ENCODE measurements at regions of chr14 and their contacts with region 1.

Region 1: DNA sequence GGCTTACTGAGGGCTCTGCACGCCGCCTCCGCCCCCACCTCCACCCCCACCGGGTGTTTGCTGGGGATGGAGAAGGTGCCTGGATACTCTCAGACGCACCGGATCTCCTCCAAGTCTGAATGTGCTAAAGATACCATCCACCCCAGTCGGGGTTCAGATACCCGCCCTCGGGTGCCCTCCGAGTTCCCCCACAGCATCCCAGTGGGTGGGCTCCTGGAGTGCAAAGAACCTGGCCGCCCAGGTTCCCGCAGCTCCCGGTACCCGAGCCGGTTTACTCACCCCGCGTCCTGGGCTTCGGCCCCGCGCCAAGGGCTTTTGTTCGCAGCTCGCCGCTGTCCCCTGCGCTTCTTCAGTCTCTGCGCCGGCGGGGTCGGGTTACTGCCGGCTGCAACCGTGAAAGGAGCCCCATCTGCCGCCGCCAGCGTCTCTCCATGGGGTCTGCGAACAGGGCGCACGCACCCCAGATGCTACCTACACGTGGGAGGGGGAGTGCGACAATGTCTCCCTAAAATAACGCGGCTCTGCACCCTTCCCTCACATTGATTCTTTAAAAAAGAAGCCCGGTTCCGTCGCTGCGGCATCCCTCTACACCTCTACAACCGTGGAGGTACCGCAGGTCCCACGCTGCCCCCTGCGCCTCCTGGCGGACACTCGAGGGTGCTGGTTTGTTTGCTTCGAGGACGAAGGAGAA is at the start of gene CCDC177:
- DNase-seq: peak; percentile 82
- ATAC-seq: peak; percentile 85
- H3K4me3 ChIP-seq: peak within 1 kb of the TSS in 4 of 5 experiments; percentile 31 to 72 (median 48)
- H3K4me3 Mint-ChIP-seq: peak within 1 kb of the TSS; percentile 84
- H3K27ac ChIP-seq: no peak within 1 kb of the TSS
- H3K27ac Mint-ChIP-seq: no peak within 1 kb of the TSS
- H3K4me1 ChIP-seq: peaks cover 21 to 26% of the 10 kb centered on the region in 2 donors
- H3K4me1 Mint-ChIP-seq: peaks cover 12% of the 10 kb centered on the region
- H3K27me3 ChIP-seq: peaks cover 0 to 58% (median 27%) of the 10 kb centered on the region in 4 experiments
- H3K27me3 Mint-ChIP-seq: peaks cover 52% of the 10 kb centered on the region
- CTCF ChIP-seq: peak; percentile 99
- total RNA-seq, gene CCDC177: not detected in 2 replicates

Region 2: DNA sequence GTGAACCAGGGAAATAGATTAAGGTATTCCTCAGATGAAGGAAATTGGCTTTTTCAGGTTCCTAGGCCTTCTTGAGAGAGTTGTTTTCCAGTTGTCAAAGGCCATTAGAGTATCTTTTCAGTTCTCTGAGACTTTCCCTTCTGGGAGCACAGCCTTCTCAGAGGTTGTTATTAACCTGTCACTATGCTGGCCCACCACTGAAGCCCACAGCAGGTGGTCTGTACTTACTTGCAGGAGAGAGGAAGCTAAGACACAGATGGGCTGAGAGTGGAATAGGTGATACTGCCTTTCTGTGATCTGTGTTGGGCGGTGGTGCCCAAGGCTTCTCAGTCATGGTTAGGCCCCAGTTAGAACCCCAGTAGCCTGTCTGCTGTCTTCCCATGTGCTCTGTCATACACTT is 337.3 kb before region 1 on chr14:
- CTCF ChIA-PET with region 1: interaction called, 102 read pairs
- POLR2A ChIA-PET with region 1: no interaction called
- intact Hi-C with region 1: loop called (anchors 1 kb)
- DNase-seq: no peak
- ATAC-seq: no peak
- H3K4me3 ChIP-seq: no peak overlapping the region
- H3K4me3 Mint-ChIP-seq: no peak overlapping the region
- H3K27ac ChIP-seq: no peak overlapping the region
- H3K27ac Mint-ChIP-seq: no peak overlapping the region
- H3K4me1 ChIP-seq: no peaks in the 10 kb centered on the region
- H3K4me1 Mint-ChIP-seq: no peaks in the 10 kb centered on the region
- H3K27me3 ChIP-seq: no peaks in the 10 kb centered on the region
- H3K27me3 Mint-ChIP-seq: no peaks in the 10 kb centered on the region
- CTCF ChIP-seq: no peak

Region 3: DNA sequence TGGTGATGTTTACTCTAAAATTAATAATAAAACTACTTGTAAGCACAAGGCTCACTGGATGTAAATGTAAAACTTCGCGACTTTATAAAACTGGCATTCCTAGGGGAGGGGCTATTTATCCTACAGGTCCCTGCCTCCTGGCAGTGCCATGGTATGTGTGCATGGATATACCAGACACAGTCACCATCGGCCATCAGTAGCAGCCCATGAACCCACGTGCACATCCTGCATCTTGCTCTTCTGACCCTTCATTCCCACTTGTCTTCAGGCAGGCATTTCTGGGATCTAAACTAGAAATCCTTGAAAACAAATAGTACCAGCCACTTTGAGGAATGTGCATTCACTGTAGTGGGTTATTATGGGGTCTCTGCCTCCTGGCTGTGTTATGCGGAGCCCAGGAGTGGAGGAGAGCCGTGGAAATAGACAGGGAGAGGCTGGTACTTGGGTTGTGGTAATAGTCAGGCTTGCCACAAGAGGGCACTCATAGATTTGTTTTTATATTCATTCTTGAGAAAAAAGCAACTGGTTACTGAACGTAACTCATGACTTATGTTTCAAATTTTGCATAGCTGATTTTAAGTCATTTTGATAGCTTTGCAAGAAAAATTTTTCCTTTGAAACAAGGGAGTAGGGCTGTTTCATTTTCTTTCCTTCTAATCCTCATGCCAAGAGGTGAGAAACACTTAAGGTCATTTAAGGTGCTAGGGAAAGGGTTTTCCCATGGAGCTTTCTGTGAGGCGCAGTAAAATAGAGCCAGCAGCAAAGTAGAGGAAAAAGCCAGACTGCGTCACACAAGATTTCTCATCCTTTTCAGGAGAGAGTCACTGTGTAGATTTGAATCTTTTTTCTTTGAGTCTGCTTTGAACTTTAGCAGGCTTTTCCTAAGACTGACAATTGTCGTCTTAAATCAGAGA is 331.8 kb before region 1 on chr14:
- CTCF ChIA-PET with region 1: interaction called, 102 read pairs
- POLR2A ChIA-PET with region 1: no interaction called
- intact Hi-C with region 1: loop called (anchors 1 kb)
- DNase-seq: peak; percentile 73
- ATAC-seq: peak; percentile 65
- H3K4me3 ChIP-seq: no peak overlapping the region
- H3K4me3 Mint-ChIP-seq: no peak overlapping the region
- H3K27ac ChIP-seq: no peak overlapping the region
- H3K27ac Mint-ChIP-seq: no peak overlapping the region
- H3K4me1 ChIP-seq: no peaks in the 10 kb centered on the region
- H3K4me1 Mint-ChIP-seq: peaks cover 3% of the 10 kb centered on the region
- H3K27me3 ChIP-seq: no peaks in the 10 kb centered on the region
- H3K27me3 Mint-ChIP-seq: no peaks in the 10 kb centered on the region
- CTCF ChIP-seq: peak; percentile 87

Region 4: DNA sequence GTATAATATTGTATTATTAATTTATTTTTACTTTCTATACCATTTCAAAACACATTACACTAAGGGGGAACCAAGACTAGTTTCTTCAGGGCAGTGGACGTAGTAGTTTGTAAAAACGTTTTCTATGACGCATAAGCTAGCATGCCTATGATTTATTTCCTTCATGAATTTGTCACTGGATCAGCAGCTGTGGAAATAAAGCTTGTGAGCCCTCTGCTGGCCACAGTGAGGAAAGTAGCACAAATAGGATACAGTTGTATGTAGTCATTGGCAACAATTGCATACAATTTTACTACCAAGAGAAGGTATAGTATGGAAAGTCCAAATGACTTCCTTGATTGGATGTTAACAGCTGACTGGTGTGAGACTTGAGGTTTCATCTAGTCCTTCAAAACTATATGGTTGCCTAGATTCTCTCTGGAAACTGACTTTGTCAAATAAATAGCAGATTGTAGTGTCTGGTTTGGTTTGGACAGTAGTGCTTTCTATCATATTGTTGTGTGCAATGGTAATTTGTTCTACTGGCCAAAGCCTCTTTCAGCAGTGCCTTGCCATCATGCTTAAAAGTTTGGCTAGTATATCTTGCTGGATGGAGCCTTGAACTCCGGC is 114.2 kb before region 1 on chr14:
- CTCF ChIA-PET with region 1: interaction called, 6 read pairs
- POLR2A ChIA-PET with region 1: no interaction called
- intact Hi-C with region 1: loop called (anchors 5 kb)
- DNase-seq: peak; percentile 72
- ATAC-seq: peak; percentile 95
- H3K4me3 ChIP-seq: no peak overlapping the region
- H3K4me3 Mint-ChIP-seq: no peak overlapping the region
- H3K27ac ChIP-seq: no peak overlapping the region
- H3K27ac Mint-ChIP-seq: no peak overlapping the region
- H3K4me1 ChIP-seq: no peaks in the 10 kb centered on the region
- H3K4me1 Mint-ChIP-seq: peaks cover 3% of the 10 kb centered on the region
- H3K27me3 ChIP-seq: no peaks in the 10 kb centered on the region
- H3K27me3 Mint-ChIP-seq: no peaks in the 10 kb centered on the region
- CTCF ChIP-seq: peak; percentile 80

Region 5: DNA sequence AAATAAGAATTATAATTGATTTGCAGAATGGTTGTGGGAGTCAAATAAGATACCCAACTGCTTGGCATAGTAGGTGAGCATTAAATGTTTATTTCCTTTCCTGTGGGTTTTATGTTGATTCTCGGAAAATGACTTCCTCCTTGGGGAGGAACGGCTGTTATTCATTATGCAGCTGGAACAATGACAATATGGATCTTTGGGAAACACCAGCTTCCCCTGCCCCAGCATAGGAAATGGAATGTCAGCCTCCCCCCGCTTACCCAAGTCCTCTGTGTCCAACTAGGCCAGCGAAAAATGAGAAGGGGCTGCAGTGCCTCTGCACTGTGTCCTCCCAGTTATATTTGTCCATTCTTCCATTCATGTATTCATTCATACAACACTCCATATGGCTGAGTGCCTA is 12.0 kb after region 1 on chr14:
- CTCF ChIA-PET with region 1: interaction called, 20 read pairs
- POLR2A ChIA-PET with region 1: no interaction called
- intact Hi-C with region 1: no loop called
- DNase-seq: no peak
- ATAC-seq: no peak
- H3K4me3 ChIP-seq: no peak overlapping the region
- H3K4me3 Mint-ChIP-seq: no peak overlapping the region
- H3K27ac ChIP-seq: no peak overlapping the region
- H3K27ac Mint-ChIP-seq: no peak overlapping the region
- H3K4me1 ChIP-seq: peaks cover 0 to 1% of the 10 kb centered on the region in 2 donors
- H3K4me1 Mint-ChIP-seq: peaks cover 2% of the 10 kb centered on the region
- H3K27me3 ChIP-seq: no peaks in the 10 kb centered on the region
- H3K27me3 Mint-ChIP-seq: peaks cover 5% of the 10 kb centered on the region
- CTCF ChIP-seq: no peak